AG04450 (cell line): ENCODE measurements at regions of chr12 and their contacts with region 1.

Region 1: DNA sequence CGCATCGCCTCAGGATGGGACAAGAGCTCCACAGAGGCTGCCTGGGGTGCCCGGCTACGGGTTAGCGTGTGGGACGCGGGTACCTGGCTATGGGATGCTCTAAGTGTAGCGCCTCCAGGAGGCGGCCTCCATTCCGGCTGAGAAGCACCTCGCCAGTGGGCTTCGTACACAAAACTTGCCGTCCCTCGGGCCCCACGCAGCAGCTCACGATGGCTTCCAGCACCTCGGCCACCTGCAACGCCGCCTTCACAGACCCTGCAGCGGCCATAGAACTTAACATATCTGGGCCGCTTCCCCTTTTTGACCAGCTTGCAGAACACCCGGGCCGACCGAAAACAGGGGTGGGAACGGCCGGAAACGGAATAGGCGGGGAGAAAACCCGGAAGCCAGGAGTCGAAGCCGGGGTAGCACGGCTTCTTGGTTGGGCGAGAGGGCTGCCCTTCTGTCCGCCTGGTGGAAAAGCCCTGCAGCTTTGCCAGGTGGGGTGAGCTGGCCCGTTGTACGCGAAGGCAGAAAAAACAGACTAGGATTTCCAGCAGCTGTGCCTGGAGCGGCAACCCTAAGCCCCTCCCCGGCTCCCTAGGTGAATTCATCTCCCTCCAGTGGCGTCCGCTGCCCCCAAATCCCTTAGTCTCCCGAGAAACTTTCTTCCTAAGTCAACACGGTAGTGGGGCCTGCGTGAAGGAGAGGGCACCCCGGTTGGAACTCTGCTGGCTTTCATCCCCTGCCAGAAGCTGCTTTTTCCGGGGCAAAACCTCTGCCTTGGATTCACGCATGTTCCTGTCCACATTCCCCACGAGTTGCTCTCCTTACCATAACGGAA is at the start of gene BBS10:
- DNase-seq: peak; percentile 85
- H3K4me3 ChIP-seq: peak within 1 kb of the TSS; percentile 86
- H3K27ac ChIP-seq: peak within 1 kb of the TSS; percentile 86
- H3K27me3 ChIP-seq: no peaks in the 10 kb centered on the region
- CTCF ChIP-seq: peak; percentile 47
- polyA plus RNA-seq, gene BBS10: 13.5 and 20.0 TPM in 2 replicates

Region 2: DNA sequence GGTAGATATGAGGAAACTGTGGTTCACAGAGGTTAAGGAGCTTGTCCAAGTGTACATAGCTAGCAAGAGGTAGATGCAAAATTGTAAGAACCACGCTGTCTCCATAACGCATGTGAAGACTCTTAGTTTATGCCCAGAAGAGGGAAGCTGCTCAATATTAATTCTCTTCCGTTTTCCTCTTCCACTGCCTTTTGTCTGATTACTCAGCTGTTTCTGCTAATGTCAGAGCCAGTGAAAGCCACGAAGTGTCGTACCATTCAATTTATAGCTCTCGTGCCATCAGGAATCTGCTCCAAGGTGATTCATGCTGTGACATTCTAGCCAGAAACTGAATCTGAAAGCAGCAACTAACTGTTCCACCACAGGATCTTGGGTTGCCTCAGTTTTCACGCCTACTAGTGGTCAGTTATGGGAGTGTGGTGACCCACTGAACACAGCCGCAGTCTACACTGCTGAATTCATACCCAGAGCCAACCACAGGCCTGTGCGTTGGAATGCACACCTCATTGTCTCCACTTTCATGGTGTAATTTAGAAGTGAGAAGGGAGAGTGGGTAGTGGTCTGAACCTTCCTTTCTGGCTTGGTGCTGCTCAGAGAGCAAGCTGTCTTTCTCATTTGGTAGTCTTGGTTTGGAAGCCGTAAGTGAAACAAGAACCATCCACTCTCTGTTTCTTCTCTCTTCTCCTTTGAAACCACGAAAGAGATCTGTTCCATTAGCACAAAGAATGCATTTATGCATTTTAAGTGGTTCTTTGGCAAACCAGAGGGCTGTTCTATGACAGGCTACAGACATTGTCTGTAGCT is 189.6 kb before region 1 on chr12:
- CTCF ChIA-PET with region 1: interaction called, 11 read pairs
- POLR2A ChIA-PET with region 1: no interaction called
- DNase-seq: peak; percentile 21
- H3K4me3 ChIP-seq: no peak overlapping the region
- H3K27ac ChIP-seq: no peak overlapping the region
- H3K27me3 ChIP-seq: no peaks in the 10 kb centered on the region
- CTCF ChIP-seq: peak; percentile 64

Region 3: GRCh38 chr12:76391461-76391860 is 43.2 kb after region 1 on chr12:
- CTCF ChIA-PET with region 1: no interaction called
- POLR2A ChIA-PET with region 1: no interaction called
- DNase-seq: no peak
- H3K4me3 ChIP-seq: no peak overlapping the region
- H3K27ac ChIP-seq: no peak overlapping the region
- H3K27me3 ChIP-seq: no peaks in the 10 kb centered on the region
- CTCF ChIP-seq: no peak